ENCODE measurements at regions of chr4 and their contacts with region 1.

Region 1: DNA sequence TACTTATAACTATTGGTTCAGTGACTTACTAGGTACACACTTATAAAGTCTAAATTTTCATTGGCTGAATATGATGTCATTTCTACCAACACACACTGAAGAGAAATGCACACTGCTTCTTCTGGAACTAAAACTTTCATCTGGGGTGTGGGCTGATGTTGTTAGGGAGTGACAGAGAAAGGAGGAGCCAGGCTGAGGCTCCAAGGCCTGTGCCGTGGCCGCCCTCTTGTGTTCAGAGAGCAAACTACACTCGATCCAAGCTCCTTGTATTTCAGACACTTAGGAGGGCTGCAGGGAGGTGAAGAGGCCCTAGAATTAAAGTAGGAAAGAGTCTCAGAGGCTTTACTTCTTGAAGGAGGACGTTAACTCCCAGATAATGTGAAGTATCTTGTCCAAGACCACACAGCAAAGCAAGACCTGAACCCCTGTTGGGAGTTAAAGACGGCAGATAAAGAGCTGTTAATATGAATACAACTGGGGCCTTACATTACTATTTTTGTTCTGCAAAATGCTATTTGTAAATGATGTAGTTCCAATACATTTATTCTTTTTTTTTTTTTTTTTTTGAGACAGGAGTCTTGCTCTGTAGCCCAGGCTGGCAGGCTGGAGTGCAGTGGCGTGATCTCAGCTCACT is 137.5 kb downstream of the AFAP1 start:
- DNase-seq: peak; percentile 76 to 87
- ATAC-seq: peak; percentile 40 to 66 (median 56)
- H3K4me3 ChIP-seq: no peak overlapping the region
- H3K27ac ChIP-seq: no peak overlapping the region
- H3K4me1 ChIP-seq: peaks cover 9 to 36% (median 32%) of the 10 kb centered on the region in 9 donors
- H3K27me3 ChIP-seq: no peaks in the 10 kb centered on the region
- CTCF ChIP-seq: peak; percentile 90 to 96 (median 94)

Region 2: GRCh38 chr4:7192252-7193029 is 609.8 kb before region 1 on chr4 and contains the start of gene SORCS2:
- intact Hi-C with region 1: loop called in 1 of 10 experiments (anchors 5 kb)
- DNase-seq: peak; percentile 53 to 74
- ATAC-seq: peak; percentile 65 to 92 (median 80)
- H3K4me3 ChIP-seq: peak within 1 kb of the TSS; percentile 14 to 52 (median 44)
- H3K27ac ChIP-seq: no peak within 1 kb of the TSS
- H3K4me1 ChIP-seq: peaks cover 4 to 18% (median 13%) of the 10 kb centered on the region in 9 donors
- H3K27me3 ChIP-seq: peaks cover 7 to 83% (median 63%) of the 10 kb centered on the region in 7 donors
- CTCF ChIP-seq: peak; percentile 44 to 87 (median 64)
- total RNA-seq, gene SORCS2: 0.95 to 5.4 (median 2.6) TPM

Region 3: DNA sequence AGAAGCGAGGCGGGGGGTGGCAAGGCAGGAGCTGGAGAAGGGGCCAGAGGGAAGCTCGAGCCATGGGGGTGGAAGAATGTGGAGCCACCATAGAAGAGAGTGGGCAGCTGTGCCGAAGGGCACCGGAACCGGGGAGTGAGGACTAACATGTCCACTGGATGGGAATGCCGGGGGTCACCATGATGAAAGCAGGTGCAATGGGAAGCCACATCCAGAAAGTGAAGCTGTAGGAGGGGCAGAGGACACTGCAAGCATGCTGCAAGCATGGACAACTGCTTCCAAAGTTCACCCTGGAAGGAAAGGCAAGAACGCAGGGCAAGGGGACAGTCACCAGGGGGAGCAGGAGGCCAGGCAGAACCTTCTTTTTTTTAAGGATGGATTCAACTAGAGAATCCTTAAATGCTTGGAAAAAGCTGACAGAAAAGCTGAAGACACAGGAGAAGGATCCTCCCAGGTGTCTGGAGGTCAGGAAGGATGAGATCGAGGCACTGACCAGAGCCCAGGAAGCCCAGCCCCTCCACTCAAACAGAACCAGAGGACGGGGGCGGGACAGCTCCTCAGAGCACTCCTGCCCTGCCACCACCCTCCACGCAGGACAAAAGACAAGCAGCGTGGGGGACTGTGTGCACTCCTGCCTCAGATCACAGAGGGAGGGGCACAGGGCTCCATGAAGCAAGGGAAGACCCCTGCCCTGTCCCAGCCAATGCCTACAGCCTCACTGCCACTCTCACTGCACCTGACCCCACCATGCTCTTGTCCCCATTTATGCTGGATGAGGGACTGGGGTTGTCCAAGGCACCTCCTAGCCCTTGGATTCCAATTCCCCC is 31.8 kb before region 1 on chr4:
- intact Hi-C with region 1: loop called in 4 of 10 experiments (anchors 2 kb)
- DNase-seq: no peak
- ATAC-seq: no peak
- H3K4me3 ChIP-seq: no peak overlapping the region
- H3K27ac ChIP-seq: no peak overlapping the region
- H3K4me1 ChIP-seq: peaks cover 0 to 14% (median 0%) of the 10 kb centered on the region in 9 donors
- H3K27me3 ChIP-seq: no peaks in the 10 kb centered on the region
- CTCF ChIP-seq: peak; percentile 27 to 70 (median 53)

Region 4: GRCh38 chr4:7929118-7929951 is 127.1 kb after region 1 on chr4:
- intact Hi-C with region 1: loop called in 2 of 10 experiments (anchors 5 to 10 kb)
- DNase-seq: no peak
- ATAC-seq: peak in 5 of 8 donors; percentile 43 to 69 (median 55)
- H3K4me3 ChIP-seq: no peak overlapping the region
- H3K27ac ChIP-seq: peak overlapping the region in 1 of 10 donors; percentile 2
- H3K4me1 ChIP-seq: peaks cover 0 to 28% (median 11%) of the 10 kb centered on the region in 9 donors
- H3K27me3 ChIP-seq: no peaks in the 10 kb centered on the region
- CTCF ChIP-seq: peak in 4 of 9 donors; percentile 15 to 39 (median 30)

Region 5: GRCh38 chr4:7987148-7987989 is 185.2 kb after region 1 on chr4:
- intact Hi-C with region 1: loop called (anchors 1 to 5 kb)
- DNase-seq: peak; percentile 63 to 75
- ATAC-seq: peak; percentile 54 to 86 (median 72)
- H3K4me3 ChIP-seq: no peak overlapping the region
- H3K27ac ChIP-seq: no peak overlapping the region
- H3K4me1 ChIP-seq: peaks cover 0 to 18% (median 10%) of the 10 kb centered on the region in 9 donors
- H3K27me3 ChIP-seq: no peaks in the 10 kb centered on the region
- CTCF ChIP-seq: peak; percentile 67 to 90 (median 88)

Region 6: DNA sequence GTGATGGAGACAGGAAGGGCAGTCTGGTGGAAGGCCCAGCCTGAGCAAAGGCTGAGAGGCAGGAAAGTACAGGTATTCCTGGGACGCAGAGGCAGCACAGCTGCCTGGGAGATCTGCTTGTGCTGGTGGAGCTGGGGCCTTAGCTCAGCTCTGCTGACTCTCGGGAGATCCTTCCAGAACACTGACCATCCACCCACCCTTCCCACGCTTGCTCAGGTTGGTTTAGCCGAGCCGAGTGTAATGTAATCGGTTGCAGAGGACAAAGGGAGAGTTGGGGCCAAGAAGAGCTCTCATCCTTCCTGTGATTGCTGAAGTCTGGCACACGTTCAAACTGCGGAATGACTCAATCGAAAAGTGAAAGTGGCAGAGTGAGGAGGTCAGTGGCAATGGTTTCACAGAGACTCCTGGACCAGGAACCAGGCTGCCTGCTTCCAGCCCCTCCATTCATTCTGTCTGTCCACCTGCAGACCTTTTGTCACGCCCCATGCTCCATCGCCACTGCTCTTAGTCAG is 734.9 kb after region 1 on chr4:
- intact Hi-C with region 1: no loop called
- DNase-seq: peak in 1 of 2 donors; percentile 41
- ATAC-seq: peak in 6 of 8 donors; percentile 31 to 76 (median 68)
- H3K4me3 ChIP-seq: no peak overlapping the region
- H3K27ac ChIP-seq: peak overlapping the region in 1 of 10 donors; percentile 29
- H3K4me1 ChIP-seq: peaks cover 0 to 10% (median 6%) of the 10 kb centered on the region in 9 donors
- H3K27me3 ChIP-seq: peaks cover 0 to 3% (median 0%) of the 10 kb centered on the region in 7 donors
- CTCF ChIP-seq: no peak